ENCODE measurements at regions of chr9 and their contacts with region 1.

Region 1: DNA sequence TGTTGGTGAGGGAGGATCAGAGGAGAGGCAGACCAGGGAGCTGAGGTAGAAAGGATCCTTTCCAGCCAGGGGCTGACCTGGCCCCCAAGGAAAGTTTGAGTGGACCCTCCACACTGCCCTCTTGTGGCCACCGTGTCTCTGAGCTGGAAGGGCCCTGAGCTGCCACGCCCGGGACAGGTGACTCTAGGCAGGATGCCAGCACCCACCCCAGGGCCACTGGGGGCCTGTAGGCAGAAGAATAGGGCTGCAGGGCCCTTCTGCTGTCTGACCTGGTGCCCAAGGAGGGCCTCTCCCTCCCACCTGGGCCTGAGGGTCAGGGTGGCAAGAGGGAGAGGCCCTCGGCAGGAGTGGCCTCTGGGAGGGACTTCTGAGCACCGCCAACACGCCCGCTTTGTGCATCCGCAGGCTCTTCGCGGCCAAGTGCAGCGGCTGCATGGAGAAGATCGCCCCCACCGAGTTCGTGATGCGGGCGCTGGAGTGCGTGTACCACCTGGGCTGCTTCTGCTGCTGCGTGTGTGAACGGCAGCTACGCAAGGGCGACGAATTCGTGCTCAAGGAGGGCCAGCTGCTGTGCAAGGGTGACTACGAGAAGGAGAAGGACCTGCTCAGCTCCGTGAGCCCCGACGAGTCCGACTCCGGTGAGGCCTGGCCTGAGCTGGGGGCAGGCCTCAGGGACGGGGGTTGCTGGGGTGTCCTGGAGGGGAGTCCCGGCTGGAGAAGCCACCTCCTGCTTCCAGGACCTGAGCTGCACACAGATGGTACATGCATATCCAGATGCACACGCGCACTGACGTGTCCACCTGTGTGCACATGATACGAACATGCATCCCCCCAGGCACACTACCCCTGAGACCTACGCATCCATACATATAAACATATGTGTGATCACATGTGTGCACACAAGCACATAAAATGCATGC is 77.0 kb downstream of the LMX1B start:
- DNase-seq: no peak
- H3K4me3 ChIP-seq: no peak overlapping the region
- H3K27ac ChIP-seq: no peak overlapping the region
- H3K4me1 ChIP-seq: no peaks in the 10 kb centered on the region
- H3K27me3 ChIP-seq: peaks cover 3 to 4% of the 10 kb centered on the region in 2 experiments
- CTCF ChIP-seq: peak; percentile 65 to 84
- POLR2A ChIP-seq: no peak

Region 2: DNA sequence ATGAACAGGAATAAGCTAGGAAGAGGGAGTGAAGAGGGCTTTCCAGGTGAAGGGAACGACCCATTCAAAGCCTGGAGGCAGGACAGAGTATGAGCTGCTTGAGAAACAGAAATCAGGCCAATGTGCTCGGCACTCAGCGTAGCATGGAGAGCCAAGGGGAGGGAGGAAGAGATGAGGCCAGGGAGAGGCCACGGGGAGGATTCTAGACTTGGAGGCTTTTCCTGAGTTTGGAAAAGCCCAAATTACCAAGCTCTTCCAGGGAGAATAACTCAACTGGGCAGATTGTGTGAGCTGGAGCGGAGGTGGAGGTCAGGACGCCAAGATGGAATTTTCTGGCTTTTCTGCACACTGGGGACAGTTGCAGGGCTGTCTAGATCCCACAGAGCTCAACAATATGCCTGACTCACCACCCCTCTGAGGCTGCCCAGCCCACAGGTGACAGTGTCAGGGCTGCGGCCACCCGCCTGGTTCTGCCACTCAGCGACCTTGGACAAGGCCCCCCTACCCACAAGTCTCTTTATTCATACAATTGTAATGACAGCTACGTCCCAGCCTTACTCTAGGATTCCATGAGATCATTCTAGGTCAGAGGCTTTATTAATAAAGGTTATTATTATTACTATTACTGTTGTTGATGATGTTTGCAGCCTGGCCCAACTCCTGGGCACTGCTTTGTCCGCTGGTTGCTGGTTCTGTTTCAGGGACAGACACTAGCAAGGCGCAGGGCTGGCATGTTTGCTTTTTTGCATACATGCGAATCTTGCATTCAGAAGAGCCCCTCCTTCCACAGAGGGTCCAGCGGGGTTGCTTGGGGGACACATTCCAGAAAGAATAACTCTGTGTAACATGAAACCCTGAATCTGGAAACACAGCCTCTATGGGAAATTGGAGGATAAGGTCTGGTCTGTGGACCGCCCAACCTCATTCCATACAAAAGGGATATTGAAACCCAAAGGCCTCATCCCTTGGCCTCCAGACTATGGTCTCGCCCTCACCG is 86.3 kb before region 1 on chr9:
- CTCF ChIA-PET with region 1: interaction called, 64 read pairs
- POLR2A ChIA-PET with region 1: no interaction called
- dilution Hi-C with region 1: no loop called
- intact Hi-C with region 1: no loop called
- DNase-seq: no peak
- H3K4me3 ChIP-seq: no peak overlapping the region
- H3K27ac ChIP-seq: no peak overlapping the region
- H3K4me1 ChIP-seq: no peaks in the 10 kb centered on the region
- H3K27me3 ChIP-seq: peaks cover 5 to 9% of the 10 kb centered on the region in 2 experiments
- CTCF ChIP-seq: no peak
- POLR2A ChIP-seq: no peak

Region 3: GRCh38 chr9:126630458-126631237 is 60.0 kb before region 1 on chr9:
- CTCF ChIA-PET with region 1: interaction called, 14 read pairs
- POLR2A ChIA-PET with region 1: no interaction called
- dilution Hi-C with region 1: no loop called
- intact Hi-C with region 1: no loop called
- DNase-seq: no peak
- H3K4me3 ChIP-seq: no peak overlapping the region
- H3K27ac ChIP-seq: no peak overlapping the region
- H3K4me1 ChIP-seq: no peaks in the 10 kb centered on the region
- H3K27me3 ChIP-seq: peaks cover 52 to 55% of the 10 kb centered on the region in 2 experiments
- CTCF ChIP-seq: no peak
- POLR2A ChIP-seq: no peak

Region 4: DNA sequence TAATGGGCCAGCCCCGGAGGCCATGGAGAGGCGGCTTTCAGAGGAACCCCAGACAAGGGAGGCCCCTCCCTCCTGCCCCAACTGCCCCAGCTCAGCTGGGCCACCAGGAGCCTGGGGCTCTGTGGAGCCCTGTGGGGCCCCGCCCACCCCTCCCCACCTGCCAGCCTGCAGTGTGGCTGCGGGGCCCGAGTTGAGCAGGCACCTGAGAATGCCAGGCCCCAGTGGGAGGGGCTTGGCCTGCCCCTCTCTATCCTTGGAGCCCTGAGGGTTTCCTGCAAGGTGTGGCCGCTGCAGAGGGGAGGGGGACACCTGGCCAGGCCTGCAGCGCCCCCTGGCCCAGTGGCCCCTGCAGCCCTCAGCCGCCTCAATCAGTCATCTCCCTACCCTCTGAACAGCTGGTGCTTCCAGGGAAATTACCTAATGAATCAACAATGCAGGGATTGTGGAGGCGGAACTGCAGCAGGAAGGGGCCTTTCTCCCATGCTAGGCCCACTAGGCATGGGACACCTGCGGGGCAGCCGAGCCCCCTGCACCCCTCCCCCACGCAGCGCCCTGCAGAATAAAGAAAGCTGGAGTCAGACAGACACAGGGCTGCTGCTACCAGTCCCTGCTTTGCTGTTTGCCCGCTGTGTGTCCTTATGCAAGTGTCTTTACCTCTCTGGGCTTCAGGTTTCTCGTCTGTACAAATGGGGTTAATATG is 29.0 kb before region 1 on chr9:
- CTCF ChIA-PET with region 1: interaction called, 27 read pairs
- POLR2A ChIA-PET with region 1: no interaction called
- dilution Hi-C with region 1: no loop called
- intact Hi-C with region 1: no loop called
- DNase-seq: peak; percentile 62
- H3K4me3 ChIP-seq: no peak overlapping the region
- H3K27ac ChIP-seq: no peak overlapping the region
- H3K4me1 ChIP-seq: peaks cover 12% of the 10 kb centered on the region
- H3K27me3 ChIP-seq: peaks cover 14 to 18% of the 10 kb centered on the region in 2 experiments
- CTCF ChIP-seq: peak; percentile 18 to 33
- POLR2A ChIP-seq: no peak

Region 5: DNA sequence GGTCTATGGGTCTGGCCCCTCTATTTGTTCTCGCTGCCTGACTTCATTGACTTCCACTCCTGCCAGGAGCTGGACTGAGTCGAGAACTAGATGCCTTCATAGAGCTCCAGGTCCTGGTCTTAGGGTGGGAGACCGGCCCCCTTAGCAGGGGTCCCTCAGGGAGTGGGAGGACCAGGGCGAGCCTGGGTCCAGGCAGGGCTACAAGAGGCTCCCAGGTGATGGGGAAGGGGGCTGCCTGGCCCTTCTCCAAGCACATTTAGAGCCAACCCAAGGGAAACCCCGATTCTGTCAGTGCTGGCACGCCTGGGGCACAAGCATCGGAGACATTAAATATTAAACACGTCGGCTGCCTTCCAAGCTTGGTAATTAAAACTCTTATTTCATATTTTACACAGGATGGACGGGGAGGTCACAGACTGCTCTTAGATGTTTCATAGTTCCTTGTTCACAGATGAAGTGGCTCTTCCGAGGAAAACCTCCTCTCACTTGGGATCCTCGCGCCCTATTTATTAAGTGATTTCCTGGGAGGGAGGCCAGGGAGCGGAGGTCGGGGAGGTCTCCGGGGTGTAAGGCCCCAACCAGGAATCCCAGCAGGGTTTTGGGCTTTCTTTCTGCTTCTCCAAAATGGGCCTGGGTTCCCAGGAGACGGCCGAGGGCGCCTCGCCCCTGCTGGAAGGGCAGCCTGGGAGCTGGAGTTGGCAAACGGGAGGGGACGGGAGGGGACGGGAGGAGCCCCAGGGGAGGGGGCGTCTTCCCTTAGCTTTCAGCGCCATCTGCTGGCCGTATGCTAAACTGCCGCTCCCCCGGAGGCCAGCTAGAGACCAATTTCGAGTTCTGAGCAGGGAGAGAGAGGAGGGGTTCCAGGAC is 90.7 kb after region 1 on chr9:
- CTCF ChIA-PET with region 1: interaction called, 43 read pairs
- POLR2A ChIA-PET with region 1: no interaction called
- dilution Hi-C with region 1: no loop called
- intact Hi-C with region 1: no loop called
- DNase-seq: peak; percentile 69
- H3K4me3 ChIP-seq: no peak overlapping the region
- H3K27ac ChIP-seq: no peak overlapping the region
- H3K4me1 ChIP-seq: no peaks in the 10 kb centered on the region
- H3K27me3 ChIP-seq: peaks cover under 1% of the 10 kb centered on the region in 2 experiments
- CTCF ChIP-seq: peak; percentile 78 to 90
- POLR2A ChIP-seq: no peak